A673 (cell line): ENCODE measurements at regions of chr15 and their contacts with region 1.

Region 1: DNA sequence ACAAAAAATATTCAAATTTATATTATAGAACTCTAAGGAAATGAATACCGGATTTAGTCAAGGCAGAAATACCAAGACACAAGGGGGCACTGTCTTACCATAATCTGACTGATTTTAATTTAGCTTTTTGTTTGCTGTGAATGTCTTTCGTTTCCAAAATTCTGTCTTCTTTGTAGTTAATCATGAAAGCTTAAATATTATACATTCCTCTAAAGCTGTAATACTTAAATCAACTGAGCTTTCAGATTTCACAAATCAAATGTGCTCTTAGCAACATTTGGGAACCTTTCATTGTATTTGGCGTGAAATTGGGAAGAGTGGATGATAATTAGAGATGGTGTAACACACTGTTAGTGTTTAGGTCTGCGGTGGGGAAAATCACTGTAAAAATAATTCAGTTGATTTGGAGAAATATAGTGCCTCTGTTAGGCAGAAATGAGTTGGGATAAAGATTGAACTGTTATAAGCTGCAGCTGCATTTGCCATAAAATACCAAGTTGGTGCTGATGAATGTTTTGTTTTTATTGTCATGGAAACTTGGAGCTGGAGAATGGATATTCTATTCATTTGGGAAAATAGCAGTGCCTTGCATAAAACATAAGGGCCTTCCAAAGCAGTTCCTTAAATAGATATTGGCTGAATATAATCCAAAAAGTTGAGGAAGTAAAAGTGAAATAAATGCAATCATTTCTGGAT is 228.2 kb downstream of the TCF12 start:
- DNase-seq: peak; percentile 86
- H3K4me3 ChIP-seq: peak overlapping the region; percentile 29
- H3K27ac ChIP-seq: peak overlapping the region; percentile 96
- H3K4me1 ChIP-seq: peaks cover 83% of the 10 kb centered on the region
- H3K27me3 ChIP-seq: no peaks in the 10 kb centered on the region
- CTCF ChIP-seq: peak; percentile 87

Region 2: DNA sequence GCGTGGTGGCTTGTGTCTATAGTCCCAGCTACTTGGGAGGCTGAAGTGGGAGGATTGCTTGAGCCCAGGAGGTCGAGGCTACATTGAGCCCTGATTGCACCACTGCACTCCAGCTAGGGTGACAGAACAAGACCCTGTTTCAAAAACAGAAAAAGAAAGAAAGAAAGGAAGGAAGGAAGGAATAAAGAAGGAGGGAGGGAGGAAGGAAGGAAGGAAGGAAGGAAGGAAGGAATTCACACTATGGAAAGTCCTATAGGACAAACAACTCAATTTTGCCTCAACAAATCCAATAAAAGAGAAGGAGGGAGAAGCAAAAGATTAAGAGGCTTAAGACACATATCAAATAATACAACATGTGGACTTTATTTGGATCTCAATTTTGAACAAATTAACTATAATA is 244.7 kb before region 1 on chr15:
- CTCF ChIA-PET with region 1: interaction called, 5 read pairs
- POLR2A ChIA-PET with region 1: interaction called, 3 read pairs
- intact Hi-C with region 1: loop called (anchors 1 kb)
- DNase-seq: peak; percentile 91
- H3K4me3 ChIP-seq: no peak overlapping the region
- H3K27ac ChIP-seq: peak overlapping the region; percentile 83
- H3K4me1 ChIP-seq: peaks cover 16% of the 10 kb centered on the region
- H3K27me3 ChIP-seq: no peaks in the 10 kb centered on the region
- CTCF ChIP-seq: no peak

Region 3: DNA sequence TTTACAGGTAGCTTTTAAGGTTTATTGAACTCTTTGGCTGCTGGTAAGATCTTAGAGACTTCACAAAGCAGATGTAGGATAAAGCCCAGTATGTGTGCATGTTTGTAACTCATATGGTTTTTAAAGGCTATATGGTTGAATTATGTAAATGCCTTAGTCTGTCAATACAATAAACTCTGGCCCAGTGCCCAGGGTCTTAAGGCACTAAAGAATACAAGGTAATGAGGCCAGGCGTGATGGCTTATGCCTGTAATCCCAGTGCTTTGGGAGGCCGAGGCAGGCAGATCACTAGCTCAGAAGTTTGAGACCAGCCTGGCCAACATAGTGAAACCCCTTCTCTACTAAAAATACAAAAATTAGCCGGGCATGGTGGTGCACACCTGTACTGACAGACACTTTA is 59.3 kb after region 1 on chr15:
- CTCF ChIA-PET with region 1: interaction called, 12 read pairs
- POLR2A ChIA-PET with region 1: interaction called, 21 read pairs
- intact Hi-C with region 1: no loop called
- DNase-seq: peak; percentile 88
- H3K4me3 ChIP-seq: no peak overlapping the region
- H3K27ac ChIP-seq: peak overlapping the region; percentile 44
- H3K4me1 ChIP-seq: peaks cover 52% of the 10 kb centered on the region
- H3K27me3 ChIP-seq: no peaks in the 10 kb centered on the region
- CTCF ChIP-seq: no peak

Region 4: DNA sequence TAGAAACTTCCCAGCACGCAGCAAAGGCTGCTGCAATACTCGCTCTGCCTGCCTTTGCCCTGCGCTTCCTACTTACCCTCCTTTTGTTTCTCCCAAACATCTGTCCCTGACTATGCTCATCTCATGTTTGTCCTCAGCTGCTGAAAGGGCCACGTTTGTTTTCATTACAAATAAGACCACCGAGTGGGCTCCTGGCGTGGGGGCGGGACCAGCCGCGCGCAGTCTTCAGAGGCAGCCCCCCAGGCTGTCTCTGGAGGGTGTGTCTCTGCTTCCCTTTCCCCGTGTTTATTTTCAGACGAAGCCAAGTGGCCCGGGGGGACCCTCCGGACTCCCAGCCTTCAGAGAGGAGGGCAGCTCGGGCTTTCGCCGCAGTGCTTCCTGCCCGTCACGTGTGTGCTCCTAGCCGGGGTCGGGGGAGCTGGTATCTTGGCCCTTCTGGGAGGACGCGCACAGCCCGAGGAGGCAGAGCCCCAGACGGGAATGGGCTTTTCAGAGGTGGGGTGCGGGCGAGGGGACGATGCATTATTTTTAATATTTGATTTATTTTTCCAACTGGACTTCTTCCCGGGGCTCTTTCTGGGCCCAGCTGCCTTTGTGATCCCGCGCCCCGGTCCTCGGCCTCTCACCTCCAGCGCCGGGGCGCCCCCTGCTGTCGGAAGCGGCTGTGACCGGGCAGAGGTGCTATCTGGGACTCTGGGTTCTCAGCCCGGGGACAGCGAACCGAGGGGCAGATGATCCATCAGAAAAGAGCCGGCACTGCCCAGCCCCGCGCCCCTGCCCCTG is 159.7 kb after region 1 on chr15:
- CTCF ChIA-PET with region 1: interaction called, 6 read pairs
- POLR2A ChIA-PET with region 1: no interaction called
- intact Hi-C with region 1: loop called (anchors 2 kb)
- DNase-seq: peak; percentile 67
- H3K4me3 ChIP-seq: peak overlapping the region; percentile 37
- H3K27ac ChIP-seq: peak overlapping the region; percentile 62
- H3K4me1 ChIP-seq: peaks cover 11% of the 10 kb centered on the region
- H3K27me3 ChIP-seq: no peaks in the 10 kb centered on the region
- CTCF ChIP-seq: peak; percentile 94

Region 5: GRCh38 chr15:57527382-57528091 is 380.9 kb after region 1 on chr15:
- CTCF ChIA-PET with region 1: interaction called, 14 read pairs
- POLR2A ChIA-PET with region 1: interaction called, 23 read pairs
- intact Hi-C with region 1: loop called (anchors 1 kb)
- DNase-seq: peak; percentile 98
- H3K4me3 ChIP-seq: no peak overlapping the region
- H3K27ac ChIP-seq: no peak overlapping the region
- H3K4me1 ChIP-seq: peaks cover 19% of the 10 kb centered on the region
- H3K27me3 ChIP-seq: no peaks in the 10 kb centered on the region
- CTCF ChIP-seq: peak; percentile 75